ENCODE measurements at regions of chr11 and their contacts with region 1.

Region 1: DNA sequence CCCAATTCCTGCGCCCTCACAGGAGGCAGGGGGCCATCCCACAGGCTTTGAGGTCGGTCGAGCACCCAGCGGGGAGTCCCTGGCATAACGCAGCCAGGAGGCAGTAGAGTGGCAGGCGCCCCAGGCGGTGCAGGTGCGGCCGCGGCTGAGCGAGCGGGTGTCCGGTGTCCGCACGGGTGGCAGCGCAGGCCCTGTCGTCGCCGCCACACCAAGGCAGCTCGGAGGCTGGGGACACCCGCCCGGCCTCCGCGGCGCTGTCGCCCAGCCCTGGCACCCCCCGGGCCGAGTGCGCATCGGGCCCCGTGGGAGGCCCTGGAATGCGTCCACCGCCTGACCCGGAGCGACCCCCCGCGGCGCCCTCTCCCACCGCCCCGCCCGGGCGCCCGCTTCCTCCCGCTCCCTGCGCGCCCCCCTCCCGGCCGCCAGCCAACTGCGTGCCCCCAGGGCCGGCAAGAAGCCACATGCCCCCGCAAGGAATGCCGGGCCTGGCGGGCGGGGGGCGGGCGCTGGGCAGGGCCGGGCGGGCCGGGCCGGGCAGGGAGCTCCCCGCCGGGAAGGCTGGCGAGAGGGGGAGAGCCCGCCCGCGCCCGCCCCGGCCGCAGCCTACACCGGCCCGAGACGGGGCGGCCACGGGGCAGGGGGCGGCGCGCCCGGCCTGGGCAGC is 33.9 kb downstream of the PRDM11 start:
- DNase-seq: no peak

Region 2: DNA sequence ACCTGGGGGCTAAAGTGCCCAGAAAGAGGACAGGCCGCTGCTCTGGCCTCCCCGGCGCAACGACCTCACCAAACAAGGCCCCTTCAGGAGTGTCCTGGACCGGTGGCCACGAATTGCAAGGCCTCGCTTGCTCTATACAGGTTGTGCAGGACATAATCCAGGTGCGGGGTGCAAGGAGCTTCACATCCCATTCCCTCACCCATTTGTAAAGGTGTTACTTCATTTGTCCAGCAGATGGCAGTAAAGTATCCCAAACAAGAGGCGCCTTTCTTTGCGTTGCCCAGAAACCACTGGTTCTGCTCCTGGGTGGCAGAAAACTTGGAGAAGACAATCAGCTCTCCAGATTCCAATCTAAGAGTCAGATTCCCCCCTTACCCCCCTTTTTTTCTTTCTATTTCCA is 69.7 kb before region 1 on chr11:
- intact Hi-C with region 1: loop called (anchors 5 kb)
- DNase-seq: no peak

Region 3: DNA sequence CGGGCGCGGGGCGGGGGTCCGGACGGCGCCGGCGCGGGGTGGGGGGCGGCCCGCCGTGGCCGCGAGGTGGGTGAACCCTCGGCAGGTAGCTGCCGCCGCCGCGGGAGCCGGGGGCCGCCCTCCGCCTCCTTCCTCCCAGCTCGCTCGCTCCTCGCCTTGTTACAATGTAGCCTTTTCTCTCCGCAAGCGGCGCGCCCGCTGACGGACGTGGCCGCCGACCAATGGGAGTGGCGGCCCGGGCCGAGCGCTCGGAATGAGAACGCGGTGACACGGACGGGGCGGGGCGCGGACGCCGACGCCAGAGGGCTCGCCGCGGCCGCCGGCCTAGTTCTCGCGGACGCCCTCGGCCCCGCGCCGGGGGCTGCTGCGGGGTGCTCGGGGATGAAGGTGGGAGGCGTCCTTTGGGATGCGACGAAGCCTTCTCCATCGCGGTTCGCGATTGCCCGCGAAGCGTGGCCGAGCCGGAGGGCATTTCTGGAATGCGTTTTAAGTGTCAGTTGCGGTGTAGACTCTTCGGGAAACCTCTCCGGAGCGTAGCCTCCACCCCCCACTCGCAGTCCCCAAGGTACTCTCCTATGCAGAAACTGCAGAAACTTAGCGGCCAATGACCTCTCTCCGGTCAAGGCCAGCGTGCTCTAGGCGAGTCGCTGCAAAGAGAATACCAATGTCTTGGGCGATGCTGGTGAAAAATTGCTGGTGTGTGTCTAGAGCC is 33.1 kb before region 1 on chr11:
- intact Hi-C with region 1: loop called (anchors 2 kb)
- DNase-seq: peak; percentile 97

Region 4: GRCh38 chr11:45209891-45210699 is 29.8 kb after region 1 on chr11:
- intact Hi-C with region 1: loop called (anchors 2 kb)
- DNase-seq: peak; percentile 88

Region 5: DNA sequence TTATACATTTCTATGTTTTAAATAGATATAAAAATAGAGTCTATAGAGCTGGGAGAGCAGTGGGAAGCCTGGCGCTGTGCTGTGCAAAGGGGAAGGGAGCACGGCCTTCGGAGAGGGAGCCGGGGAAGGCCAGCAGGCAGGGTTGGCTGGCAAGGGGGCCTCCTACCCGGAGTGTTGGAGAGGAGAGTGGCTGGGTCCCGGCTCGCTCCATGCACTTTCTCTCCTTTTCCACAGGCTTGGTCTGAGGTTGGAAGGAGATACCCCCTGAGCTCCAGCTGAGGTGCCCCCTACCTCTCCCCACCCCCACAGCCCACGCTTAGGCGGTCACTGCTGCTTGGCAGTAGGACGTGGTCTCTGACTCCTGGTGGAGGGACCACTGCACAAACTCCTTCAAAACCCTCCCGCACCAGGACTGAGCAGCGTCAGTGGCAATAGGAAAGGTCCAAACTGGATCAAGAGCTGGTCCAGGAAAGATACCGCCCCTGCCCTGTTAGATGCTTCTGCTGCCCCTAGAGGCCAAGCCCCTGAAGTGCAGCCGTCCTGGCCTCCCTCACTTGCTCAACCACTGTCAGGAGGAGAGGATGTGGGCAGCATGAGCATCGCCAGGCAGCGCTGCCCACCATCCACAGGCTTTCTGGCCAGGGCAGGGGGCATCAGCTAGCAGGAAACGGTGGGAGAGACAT is 53.0 kb after region 1 on chr11:
- intact Hi-C with region 1: loop called (anchors 10 kb)
- DNase-seq: no peak